GM18951 (cell line): ENCODE measurements at regions of chr13 and their contacts with region 1.

Region 1: GRCh38 chr13:72808917-72809500 is 27.1 kb downstream of the PIBF1 start:
- POLR2A ChIP-seq: no peak

Region 2: DNA sequence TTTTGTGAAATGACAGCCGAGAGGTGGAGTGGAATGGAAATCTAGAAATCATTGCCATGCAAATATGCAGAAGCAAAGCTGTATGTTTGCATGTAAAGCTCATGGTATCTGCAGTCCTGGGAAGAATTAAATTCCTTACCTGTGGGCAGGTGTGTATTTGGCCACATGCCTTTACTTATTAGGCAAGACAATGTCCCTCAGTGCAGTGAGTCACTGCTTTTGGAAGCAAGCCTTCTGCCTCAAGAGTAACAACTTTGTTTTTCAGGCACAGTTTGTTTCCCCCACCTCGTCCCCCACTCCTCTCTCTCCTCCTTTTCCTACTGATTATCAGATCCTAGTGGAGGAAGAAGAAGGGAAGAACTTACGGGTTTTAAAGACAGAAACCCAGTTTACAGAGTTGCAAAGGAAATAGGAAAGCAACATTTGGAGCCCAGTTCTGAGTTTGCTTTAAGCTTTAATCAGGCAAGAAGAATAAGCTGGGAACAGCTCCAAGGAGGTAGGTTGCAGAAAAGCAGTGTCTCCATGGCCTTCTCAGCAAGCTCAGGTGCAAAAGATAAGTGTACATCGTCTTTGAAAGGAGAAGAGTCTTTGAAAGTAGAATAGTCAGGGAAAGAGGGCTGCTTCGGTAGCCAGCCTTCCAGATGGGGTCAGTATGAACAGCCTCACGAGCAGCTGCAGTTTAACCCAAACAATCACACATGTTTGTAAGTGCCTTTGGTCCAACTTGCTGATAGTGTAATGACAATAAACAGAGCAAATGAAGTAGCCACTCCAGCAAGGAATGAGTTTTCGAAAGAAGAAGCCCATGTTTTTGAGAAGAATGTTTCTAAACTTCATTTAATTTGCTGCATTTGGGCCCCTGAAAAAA is 439.9 kb after region 1 on chr13:
- in situ Hi-C with region 1: no loop called
- POLR2A ChIP-seq: no peak

Region 3: DNA sequence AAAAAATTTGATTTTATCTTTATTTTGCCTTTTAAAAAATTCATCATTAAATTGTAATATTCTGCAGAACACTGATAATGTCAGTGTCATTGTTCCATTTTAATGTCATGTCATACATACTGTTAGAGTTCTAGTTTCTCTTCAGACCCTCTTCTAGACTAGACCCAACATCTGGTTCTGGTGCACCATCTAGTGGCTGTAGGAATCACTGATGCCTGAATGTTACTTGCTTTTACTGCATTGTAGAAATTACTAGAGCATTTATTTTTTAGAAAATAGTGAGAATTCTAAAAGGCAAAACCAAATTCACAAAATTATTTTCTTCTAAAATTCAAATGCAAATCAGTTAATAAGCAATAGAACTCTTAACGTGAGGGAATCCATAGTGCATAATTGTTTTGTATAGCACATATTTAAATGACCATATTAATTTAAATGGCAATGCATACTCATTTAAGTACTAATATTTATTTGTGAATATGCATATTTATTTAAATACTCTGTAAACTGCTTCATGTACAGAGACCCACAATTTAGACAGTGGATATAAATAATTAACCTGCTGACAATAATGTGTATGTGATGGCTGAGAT is 899.5 kb after region 1 on chr13:
- in situ Hi-C with region 1: loop called (anchors 25 kb)
- POLR2A ChIP-seq: no peak